Breast epithelium (tissue), 4 donors: ENCODE measurements at regions of chr4 and their contacts with region 1.

Region 1: GRCh38 chr4:172819353-172819752 is 349.3 kb upstream of the GALNT7 start:
- DNase-seq: no peak
- H3K4me3 ChIP-seq: no peak overlapping the region
- H3K27ac ChIP-seq: no peak overlapping the region
- H3K4me1 ChIP-seq: no peaks in the 10 kb centered on the region
- H3K27me3 ChIP-seq: no peaks in the 10 kb centered on the region
- CTCF ChIP-seq: no peak
- POLR2A ChIP-seq: no peak

Region 2: GRCh38 chr4:172716291-172716690 is 103.1 kb before region 1 on chr4:
- intact Hi-C with region 1: no loop called
- DNase-seq: no peak
- H3K4me3 ChIP-seq: no peak overlapping the region
- H3K27ac ChIP-seq: no peak overlapping the region
- H3K4me1 ChIP-seq: no peaks in the 10 kb centered on the region
- H3K27me3 ChIP-seq: no peaks in the 10 kb centered on the region
- CTCF ChIP-seq: no peak
- POLR2A ChIP-seq: no peak

Region 3: GRCh38 chr4:172794307-172794703 is 25.0 kb before region 1 on chr4:
- intact Hi-C with region 1: no loop called
- DNase-seq: no peak
- H3K4me3 ChIP-seq: no peak overlapping the region
- H3K27ac ChIP-seq: no peak overlapping the region
- H3K4me1 ChIP-seq: no peaks in the 10 kb centered on the region
- H3K27me3 ChIP-seq: no peaks in the 10 kb centered on the region
- CTCF ChIP-seq: no peak
- POLR2A ChIP-seq: no peak

Region 4: GRCh38 chr4:174036111-174036510 is 1216.8 kb after region 1 on chr4:
- intact Hi-C with region 1: loop called (anchors 5 kb)
- DNase-seq: no peak
- H3K4me3 ChIP-seq: no peak overlapping the region
- H3K27ac ChIP-seq: no peak overlapping the region
- H3K4me1 ChIP-seq: no peaks in the 10 kb centered on the region
- H3K27me3 ChIP-seq: no peaks in the 10 kb centered on the region
- CTCF ChIP-seq: no peak
- POLR2A ChIP-seq: no peak